Tibial artery (tissue), 4 donors: ENCODE measurements at regions of chr22 and their contacts with region 1.

Region 1: DNA sequence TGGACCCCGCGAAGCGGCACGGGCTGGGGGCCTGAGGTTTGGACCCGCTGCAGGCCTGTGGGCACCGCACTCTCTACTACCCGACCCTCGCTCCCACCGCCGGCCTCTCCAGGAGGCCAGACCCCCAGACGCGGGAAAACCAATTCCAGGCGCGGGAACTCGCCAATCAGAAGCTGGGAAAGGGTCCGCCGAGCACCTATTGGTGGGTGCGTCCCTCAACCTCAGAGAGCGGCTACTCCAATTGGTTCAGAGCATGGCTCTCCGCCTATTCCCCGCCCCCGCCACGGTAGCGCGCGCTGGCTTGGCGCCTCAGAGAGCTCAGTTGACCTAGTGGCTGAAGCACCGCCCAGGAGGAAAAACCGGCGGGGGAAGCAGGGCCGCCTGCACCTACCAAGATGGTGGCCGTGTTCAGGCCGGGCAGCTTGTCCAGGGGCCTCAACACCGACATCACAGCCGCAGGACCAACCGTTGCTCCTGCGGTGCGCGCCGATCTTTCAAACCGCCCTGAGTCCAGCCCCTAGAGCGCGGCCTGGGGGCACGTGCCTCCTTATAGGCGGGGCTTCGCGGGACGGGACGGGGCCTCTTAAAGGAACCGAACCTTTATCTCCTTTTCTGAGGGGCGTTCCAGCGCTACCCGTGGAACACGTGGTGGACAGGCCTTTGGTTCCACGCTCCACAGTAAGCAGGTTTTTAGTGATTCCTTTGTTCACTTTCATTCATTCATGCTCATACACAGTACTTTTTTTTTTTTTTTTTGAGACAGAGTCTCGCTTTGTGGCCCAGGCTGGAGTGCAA is at the start of gene CENPM:
- DNase-seq: peak; percentile 86 to 92
- H3K4me3 ChIP-seq: peak within 1 kb of the TSS; percentile 56 to 65
- H3K27ac ChIP-seq: peak within 1 kb of the TSS; percentile 9 to 24
- H3K4me1 ChIP-seq: peaks cover 0 to 15% (median 11%) of the 10 kb centered on the region in 4 donors
- H3K27me3 ChIP-seq: peaks cover 0 to 16% of the 10 kb centered on the region in 2 donors
- CTCF ChIP-seq: no peak

Region 2: DNA sequence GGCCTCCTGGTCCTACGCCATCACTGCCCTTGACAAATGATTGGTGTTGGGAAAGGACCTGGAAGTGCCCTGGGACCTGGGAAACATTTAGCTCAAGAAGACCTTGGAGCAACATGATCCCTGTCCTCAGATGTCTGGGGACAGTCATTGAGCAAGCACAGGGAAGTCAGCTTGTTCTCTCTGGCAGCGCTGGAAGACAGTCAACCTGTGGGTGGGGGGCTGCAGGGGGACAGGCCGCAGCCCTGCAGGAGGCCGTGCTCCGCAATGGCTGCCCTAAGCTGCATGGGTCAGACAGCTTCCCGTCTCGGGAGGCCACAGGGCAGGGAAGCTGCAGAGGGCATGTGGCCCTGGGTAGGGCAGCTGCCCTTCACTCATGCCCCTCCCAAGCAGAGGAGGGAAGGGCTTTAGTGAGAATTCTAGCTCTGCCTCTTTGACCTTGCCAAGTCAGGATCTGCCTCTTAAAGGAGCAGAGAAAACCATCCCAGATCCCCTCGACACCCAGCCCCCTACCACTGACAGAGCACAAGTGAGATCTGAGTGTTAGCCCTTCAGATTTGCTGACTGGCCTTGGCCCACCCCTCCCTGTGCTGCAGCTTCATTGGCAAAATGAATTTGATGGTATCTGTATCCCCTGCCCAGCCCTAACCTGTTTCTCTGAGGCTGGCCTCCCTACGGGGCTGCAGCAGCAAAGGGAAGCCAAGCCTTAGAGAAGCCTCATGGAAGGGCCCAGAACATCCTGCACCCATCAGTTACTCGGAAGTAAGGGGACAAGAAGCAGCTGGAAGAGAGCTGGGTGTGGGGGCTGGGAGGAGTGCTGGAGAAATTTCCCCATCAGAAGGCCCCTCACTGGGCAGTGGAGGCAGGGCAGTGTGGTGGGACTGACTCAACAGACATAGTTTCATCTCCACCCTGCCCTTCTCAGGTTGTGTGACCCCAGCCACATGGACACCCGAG is 120.1 kb before region 1 on chr22:
- intact Hi-C with region 1: loop called (anchors 5 kb)
- DNase-seq: no peak
- H3K4me3 ChIP-seq: no peak overlapping the region
- H3K27ac ChIP-seq: peak overlapping the region in 1 of 2 donors; percentile 27
- H3K4me1 ChIP-seq: peaks cover 0 to 20% (median 6%) of the 10 kb centered on the region in 4 donors
- H3K27me3 ChIP-seq: no peaks in the 10 kb centered on the region
- CTCF ChIP-seq: no peak

Region 3: GRCh38 chr22:42039271-42039670 is 92.4 kb after region 1 on chr22:
- intact Hi-C with region 1: no loop called
- DNase-seq: no peak
- H3K4me3 ChIP-seq: no peak overlapping the region
- H3K27ac ChIP-seq: no peak overlapping the region
- H3K4me1 ChIP-seq: no peaks in the 10 kb centered on the region
- H3K27me3 ChIP-seq: no peaks in the 10 kb centered on the region
- CTCF ChIP-seq: no peak